ENCODE measurements at regions of chr21 and their contacts with region 1.

Region 1: DNA sequence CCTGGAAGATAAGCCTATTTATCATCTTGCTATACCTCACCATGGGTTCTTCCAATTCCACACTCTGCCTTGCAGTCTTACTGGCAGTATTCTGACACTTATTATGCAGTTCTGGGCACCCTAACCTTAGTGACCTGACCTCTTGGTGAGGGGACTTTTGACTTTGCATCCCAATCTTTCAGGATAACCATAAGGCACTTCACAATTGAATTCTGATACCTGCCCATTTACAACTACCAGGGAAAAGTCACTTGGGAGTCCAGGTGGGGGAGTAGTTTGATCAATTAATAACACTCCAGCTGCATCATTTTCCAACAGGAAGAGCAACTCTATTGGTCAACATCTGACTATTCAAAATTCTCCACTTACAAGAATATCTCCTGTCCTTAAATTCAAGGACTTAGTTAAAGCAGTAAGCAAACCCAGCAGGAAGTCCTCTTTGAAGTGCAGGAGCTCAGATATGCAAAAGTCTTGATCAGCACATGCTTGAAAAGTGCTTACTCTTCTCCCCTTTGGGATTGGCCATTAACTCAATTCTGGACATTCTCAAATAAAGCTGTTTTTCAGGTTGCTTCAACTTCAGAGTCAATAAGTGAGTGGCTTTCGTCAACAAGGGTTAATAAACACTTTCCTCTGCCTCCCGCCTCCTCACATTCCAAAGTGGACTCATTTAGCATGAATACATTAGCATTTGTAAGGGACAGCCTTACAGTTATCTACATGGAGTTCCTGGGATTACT is 177.4 kb upstream of the NRIP1 start:
- DNase-seq: peak; percentile 60
- ATAC-seq: peak; percentile 32
- H3K4me3 ChIP-seq: no peak overlapping the region
- H3K27ac ChIP-seq: peak overlapping the region; percentile 47; the same call in 1 of the 2 replicates
- H3K4me1 ChIP-seq: peaks cover 28% of the 10 kb centered on the region
- H3K27me3 ChIP-seq: no peaks in the 10 kb centered on the region
- CTCF ChIP-seq: peak; percentile 55; the same call in 1 of the 2 replicates

Region 2: GRCh38 chr21:15144026-15144425 is 98.1 kb before region 1 on chr21:
- CTCF ChIA-PET with region 1: no interaction called
- POLR2A ChIA-PET with region 1: no interaction called
- intact Hi-C with region 1: no loop called
- DNase-seq: no peak
- ATAC-seq: no peak
- H3K4me3 ChIP-seq: no peak overlapping the region
- H3K27ac ChIP-seq: no peak overlapping the region
- H3K4me1 ChIP-seq: no peaks in the 10 kb centered on the region
- H3K27me3 ChIP-seq: no peaks in the 10 kb centered on the region
- CTCF ChIP-seq: no peak

Region 3: GRCh38 chr21:15282665-15283064 is 40.5 kb after region 1 on chr21:
- CTCF ChIA-PET with region 1: no interaction called
- POLR2A ChIA-PET with region 1: no interaction called
- intact Hi-C with region 1: loop called (anchors 5 kb)
- DNase-seq: peak; percentile 67
- ATAC-seq: peak; percentile 84
- H3K4me3 ChIP-seq: no peak overlapping the region
- H3K27ac ChIP-seq: peak overlapping the region; percentile 40
- H3K4me1 ChIP-seq: peaks cover 18% of the 10 kb centered on the region
- H3K27me3 ChIP-seq: no peaks in the 10 kb centered on the region
- CTCF ChIP-seq: no peak

Region 4: GRCh38 chr21:15319727-15320126 is 77.6 kb after region 1 on chr21:
- CTCF ChIA-PET with region 1: no interaction called
- POLR2A ChIA-PET with region 1: interaction called, 10 read pairs
- intact Hi-C with region 1: no loop called
- DNase-seq: no peak
- ATAC-seq: no peak
- H3K4me3 ChIP-seq: no peak overlapping the region
- H3K27ac ChIP-seq: no peak overlapping the region
- H3K4me1 ChIP-seq: peaks cover 4% of the 10 kb centered on the region; the same call in 1 of the 2 replicates
- H3K27me3 ChIP-seq: no peaks in the 10 kb centered on the region
- CTCF ChIP-seq: no peak